Ascending aorta (tissue), 2 donors: ENCODE measurements at regions of chr5 and their contacts with region 1.

Region 1: DNA sequence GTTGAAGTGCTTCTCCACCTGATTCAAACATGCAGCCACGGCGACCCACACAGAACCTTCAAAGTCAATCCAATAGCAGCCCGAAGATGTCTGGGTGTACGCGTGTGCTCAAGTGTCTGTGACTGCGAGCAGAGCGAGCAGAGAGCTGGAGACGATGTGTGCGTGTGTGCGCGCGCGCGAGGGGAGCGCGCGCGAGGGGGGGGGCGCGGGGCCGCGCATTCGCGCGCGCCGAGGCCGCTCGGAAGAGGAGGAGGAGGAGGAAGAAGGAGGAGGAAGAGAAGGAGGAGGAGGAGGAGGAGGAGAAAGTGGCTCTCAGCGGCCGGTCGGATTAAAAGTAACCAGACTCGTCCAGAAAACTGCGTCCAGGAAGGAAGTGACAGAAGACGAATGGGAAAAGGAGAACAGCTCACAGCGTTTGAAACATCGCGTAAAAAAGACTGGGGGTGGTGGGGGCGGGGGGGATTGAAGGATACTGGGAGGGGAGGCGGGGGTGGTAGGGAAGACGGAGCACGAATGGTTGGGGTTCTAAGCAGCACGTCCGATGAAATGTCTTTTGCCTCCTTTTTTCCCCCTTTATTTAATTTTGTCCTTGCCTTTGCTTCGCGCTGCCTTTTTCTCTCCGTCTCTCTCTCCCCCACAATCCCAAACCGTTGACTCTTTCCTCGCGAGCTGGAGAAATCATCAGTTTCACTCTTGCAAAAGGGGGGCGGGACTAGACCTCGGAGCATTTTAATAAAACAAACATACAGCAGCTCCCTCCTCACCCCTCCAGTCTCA is at the start of gene MEF2C:
- DNase-seq: peak; percentile 43 to 88
- H3K4me3 ChIP-seq: peak within 1 kb of the TSS; percentile 75 to 83
- H3K27ac ChIP-seq: peak within 1 kb of the TSS; percentile 90 to 95
- H3K4me1 ChIP-seq: no peaks in the 10 kb centered on the region
- H3K27me3 ChIP-seq: no peaks in the 10 kb centered on the region
- CTCF ChIP-seq: no peak
- total RNA-seq, gene MEF2C: 138 TPM

Region 2: DNA sequence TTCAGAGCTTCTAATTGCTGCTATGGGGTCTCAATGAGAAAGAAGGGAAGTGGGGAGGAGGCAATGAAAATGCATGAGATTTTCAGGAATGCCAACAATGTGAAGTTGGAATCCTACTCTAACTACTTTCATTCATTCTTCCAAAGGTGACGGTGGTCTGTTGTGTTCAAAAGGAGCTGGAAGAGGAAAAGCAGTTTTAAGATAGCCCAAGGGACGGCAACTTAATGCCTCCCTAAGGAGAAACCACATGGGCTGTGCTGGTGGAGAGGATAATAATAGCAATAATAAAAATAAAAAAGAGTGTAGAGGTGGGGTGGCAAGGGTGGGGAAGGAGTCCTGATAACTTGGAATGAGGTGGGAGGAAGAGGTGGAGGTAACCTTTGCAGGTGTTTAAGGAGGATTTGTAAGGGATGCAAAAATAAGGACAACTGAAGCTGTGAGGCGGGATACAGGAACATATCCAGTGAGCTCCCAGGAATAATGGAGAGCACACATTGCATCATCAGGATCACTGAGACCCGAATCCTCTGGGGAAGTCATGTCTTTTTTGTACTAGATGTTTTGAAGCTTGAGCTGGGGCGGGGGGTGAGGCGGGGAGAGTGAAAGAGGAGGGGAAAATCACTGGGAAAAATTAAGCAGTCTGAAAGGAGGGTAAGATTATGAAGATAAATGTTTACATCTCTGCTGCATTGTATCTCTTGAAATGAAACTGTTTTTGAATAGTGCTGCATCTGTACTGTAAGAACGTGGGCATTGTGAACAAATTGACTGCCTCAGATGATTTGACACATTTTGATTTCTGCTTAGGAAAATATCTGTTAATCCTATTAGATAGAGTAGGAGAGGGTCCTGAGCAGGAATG is 494.5 kb before region 1 on chr5:
- intact Hi-C with region 1: no loop called
- DNase-seq: no peak
- H3K4me3 ChIP-seq: no peak overlapping the region
- H3K27ac ChIP-seq: no peak overlapping the region
- H3K4me1 ChIP-seq: no peaks in the 10 kb centered on the region
- H3K27me3 ChIP-seq: no peaks in the 10 kb centered on the region
- CTCF ChIP-seq: no peak

Region 3: DNA sequence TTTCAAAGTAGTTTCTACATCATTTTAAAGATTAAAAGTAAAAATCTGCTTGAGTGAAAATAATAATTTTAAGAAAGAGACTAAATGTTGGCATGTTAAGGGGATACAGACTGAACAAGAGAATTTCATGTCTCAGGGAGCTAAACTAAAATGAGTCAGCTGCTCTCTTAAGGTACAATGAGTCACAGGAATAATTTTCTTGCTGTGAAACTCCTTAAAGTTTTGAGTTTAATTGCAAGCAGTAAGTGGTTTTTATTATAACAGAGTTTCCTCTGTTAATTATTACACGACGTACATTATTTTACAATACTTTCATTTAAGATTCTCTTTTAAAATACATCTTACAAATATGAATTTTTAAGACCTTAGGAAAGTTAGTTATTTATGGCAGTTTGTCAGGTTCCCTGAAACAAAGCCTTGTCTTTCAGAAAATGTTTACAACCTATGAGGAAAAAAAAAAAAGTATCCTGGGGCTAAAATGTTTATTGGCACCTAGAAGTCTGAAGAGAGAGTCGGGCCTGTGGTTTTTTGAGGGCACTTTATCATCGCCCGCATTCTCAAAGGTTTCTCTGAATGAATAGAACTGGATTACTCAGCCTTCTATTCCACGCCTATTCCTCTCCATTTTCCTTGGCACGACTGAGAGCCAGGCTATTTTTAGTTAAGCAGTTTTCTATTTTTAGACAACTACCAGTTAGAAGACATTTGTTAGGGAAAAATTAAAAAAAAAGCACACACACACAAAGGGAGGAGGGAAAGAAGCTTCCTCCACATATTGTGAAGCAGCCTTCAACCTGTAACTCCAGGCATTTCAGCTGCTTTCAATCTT is 97.6 kb before region 1 on chr5:
- intact Hi-C with region 1: loop called (anchors 2 kb)
- DNase-seq: peak in 1 of 2 donors; percentile 83
- H3K4me3 ChIP-seq: peak overlapping the region; percentile 29 to 50
- H3K27ac ChIP-seq: peak overlapping the region; percentile 84 to 90
- H3K4me1 ChIP-seq: peaks cover 10 to 27% of the 10 kb centered on the region in 2 donors
- H3K27me3 ChIP-seq: no peaks in the 10 kb centered on the region
- CTCF ChIP-seq: no peak

Region 4: DNA sequence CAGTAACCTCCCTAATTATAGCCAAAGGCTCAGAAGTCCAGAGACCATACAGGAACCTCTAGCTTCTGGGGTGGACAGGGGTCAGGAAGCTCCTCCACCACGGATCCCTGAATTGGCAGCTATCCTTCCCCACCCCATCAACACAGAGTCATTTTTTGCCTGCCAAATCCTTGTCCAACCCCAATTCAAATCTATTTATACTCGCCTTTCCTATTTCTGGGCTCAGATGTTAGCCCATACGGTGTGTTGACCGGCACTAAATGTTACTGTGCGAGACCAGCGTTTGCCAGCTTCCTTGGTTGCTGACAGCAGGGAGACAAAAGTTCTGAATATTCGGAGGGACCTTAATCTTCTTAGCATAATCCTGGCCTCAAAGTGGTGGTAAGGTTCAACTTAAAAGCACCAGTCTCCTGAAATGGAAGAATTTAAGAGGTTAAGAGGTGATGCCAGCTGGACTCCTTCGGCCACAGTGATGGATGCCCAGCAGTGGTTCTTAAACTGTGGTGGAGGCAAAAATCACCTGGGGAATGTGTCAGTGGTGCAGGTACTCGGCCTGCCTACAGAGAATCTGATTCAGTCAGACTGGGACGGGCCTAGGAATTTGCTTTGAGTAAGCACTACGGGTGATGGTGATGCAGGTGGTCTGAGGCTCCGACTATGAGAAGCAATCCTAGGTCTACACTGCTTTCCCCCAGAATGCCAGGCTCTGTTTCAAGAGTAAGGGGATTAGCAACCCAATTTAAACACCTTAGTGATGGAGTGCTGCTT is 204.5 kb after region 1 on chr5:
- intact Hi-C with region 1: loop called (anchors 5 kb)
- DNase-seq: peak in 1 of 2 donors; percentile 73
- H3K4me3 ChIP-seq: peak overlapping the region in 1 of 2 donors; percentile 34
- H3K27ac ChIP-seq: peak overlapping the region; percentile 78 to 88
- H3K4me1 ChIP-seq: peaks cover 0 to 8% of the 10 kb centered on the region in 2 donors
- H3K27me3 ChIP-seq: no peaks in the 10 kb centered on the region
- CTCF ChIP-seq: no peak

Region 5: GRCh38 chr5:89313804-89314588 is 430.7 kb after region 1 on chr5:
- intact Hi-C with region 1: loop called (anchors 10 kb)
- DNase-seq: no peak
- H3K4me3 ChIP-seq: no peak overlapping the region
- H3K27ac ChIP-seq: peak overlapping the region; percentile 31 to 69
- H3K4me1 ChIP-seq: peaks cover 9 to 23% of the 10 kb centered on the region in 2 donors
- H3K27me3 ChIP-seq: no peaks in the 10 kb centered on the region
- CTCF ChIP-seq: no peak

Region 6: DNA sequence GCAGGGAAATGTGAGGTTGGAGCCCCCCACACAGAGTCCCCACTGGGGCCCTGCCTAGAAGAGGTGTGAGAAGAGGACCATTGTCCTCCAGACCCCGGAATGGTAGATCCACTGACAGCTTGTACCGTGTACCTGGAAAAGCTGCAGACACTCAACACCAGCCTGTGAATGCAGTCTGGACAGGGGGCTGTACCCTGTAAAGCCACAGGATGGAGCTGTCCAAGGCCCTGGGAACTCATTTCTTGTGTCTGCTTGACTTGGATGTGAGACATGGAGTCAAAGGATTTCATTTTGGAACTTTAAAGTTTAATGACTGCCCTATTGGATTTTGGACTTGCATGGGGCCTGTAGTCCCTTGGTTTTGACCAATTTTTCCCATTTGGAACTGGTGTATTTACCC is 534.7 kb after region 1 on chr5:
- intact Hi-C with region 1: no loop called
- DNase-seq: no peak
- H3K4me3 ChIP-seq: no peak overlapping the region
- H3K27ac ChIP-seq: no peak overlapping the region
- H3K4me1 ChIP-seq: no peaks in the 10 kb centered on the region
- H3K27me3 ChIP-seq: no peaks in the 10 kb centered on the region
- CTCF ChIP-seq: no peak

Region 7: GRCh38 chr5:90264689-90265544 is 1381.7 kb after region 1 on chr5:
- intact Hi-C with region 1: loop called (anchors 5 kb)
- DNase-seq: peak in 1 of 2 donors; percentile 71
- H3K4me3 ChIP-seq: peak overlapping the region in 1 of 2 donors; percentile 29
- H3K27ac ChIP-seq: no peak overlapping the region
- H3K4me1 ChIP-seq: peaks cover 0 to 12% of the 10 kb centered on the region in 2 donors
- H3K27me3 ChIP-seq: no peaks in the 10 kb centered on the region
- CTCF ChIP-seq: peak; percentile 75 to 94 (median 92)